ENCODE measurements at regions of chr12 and their contacts with region 1.

Region 1: GRCh38 chr12:27305673-27306456 is 26.8 kb upstream of the BMAL2 start:
- DNase-seq: no peak
- ATAC-seq: peak; percentile 26; the same call in 2 of the 3 replicates
- H3K4me3 ChIP-seq: no peak overlapping the region
- H3K27ac ChIP-seq: no peak overlapping the region
- H3K4me1 ChIP-seq: peaks cover 35% of the 10 kb centered on the region
- H3K27me3 ChIP-seq: no peaks in the 10 kb centered on the region
- CTCF ChIP-seq: peak in 1 of 3 experiments; percentile 15; a peak in 1 of 6 replicates
- EP300 ChIP-seq: no peak
- POLR2A ChIP-seq: no peak
- RAD21 ChIP-seq: peak; percentile 54; the same call in 1 of the 2 replicates

Region 2: GRCh38 chr12:27034607-27035293 is 271.1 kb before region 1 on chr12:
- CTCF ChIA-PET with region 1: interaction called, 107 read pairs
- POLR2A ChIA-PET with region 1: interaction called, 5 read pairs
- RAD21 ChIA-PET with region 1: interaction called, 37 read pairs
- SMC1A ChIA-PET with region 1: interaction called, 52 read pairs
- in situ Hi-C with region 1: no loop called
- intact Hi-C with region 1: loop called (anchors 1 kb)
- DNase-seq: no peak
- ATAC-seq: no peak
- H3K4me3 ChIP-seq: no peak overlapping the region
- H3K27ac ChIP-seq: no peak overlapping the region
- H3K4me1 ChIP-seq: no peaks in the 10 kb centered on the region
- H3K27me3 ChIP-seq: no peaks in the 10 kb centered on the region
- CTCF ChIP-seq: no peak
- EP300 ChIP-seq: no peak
- POLR2A ChIP-seq: no peak
- RAD21 ChIP-seq: no peak

Region 3: DNA sequence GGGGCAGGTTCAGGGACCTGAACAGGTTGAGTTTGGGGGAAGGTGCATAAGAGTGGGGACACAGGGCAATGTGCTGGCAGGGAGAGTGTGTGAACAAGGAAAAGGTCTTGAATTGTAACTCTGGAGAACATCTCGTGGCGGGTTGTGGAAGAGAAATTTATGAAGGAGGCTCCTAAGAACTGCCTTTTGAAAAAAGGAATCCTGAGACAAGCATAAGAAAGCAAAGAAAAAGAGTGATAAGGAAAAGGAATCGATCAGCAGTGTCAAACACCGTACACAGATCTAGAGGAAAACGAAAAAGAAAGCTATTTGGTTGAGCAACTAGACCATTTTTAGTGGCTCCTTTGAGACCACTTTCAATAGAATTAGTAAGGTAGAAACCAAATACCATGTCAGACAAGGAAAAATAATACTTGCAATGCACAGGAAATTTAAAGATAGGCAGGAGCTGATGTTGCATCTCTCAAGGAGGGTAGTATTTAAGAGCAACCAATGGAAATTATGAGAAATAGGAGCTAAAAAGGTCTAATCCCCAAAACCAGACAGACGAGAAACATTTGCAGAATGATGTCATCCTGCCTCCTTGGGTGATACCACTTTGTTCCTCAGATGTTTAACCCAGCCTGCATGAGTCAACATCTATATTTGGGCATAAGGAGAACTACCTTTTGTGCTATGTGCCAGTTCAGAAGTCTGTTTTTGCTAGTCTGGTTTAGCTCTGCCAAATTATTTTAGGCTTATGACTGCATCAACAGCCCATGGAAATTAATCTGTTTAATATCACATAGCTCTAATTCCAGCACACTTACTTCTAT is 126.3 kb before region 1 on chr12:
- CTCF ChIA-PET with region 1: interaction called, 26 read pairs
- POLR2A ChIA-PET with region 1: interaction called, 8 read pairs
- RAD21 ChIA-PET with region 1: interaction called, 34 read pairs
- SMC1A ChIA-PET with region 1: interaction called, 39 read pairs
- in situ Hi-C with region 1: no loop called
- intact Hi-C with region 1: no loop called
- DNase-seq: peak; percentile 96
- ATAC-seq: peak; percentile 94
- H3K4me3 ChIP-seq: peak overlapping the region; percentile 23
- H3K27ac ChIP-seq: peak overlapping the region; percentile 94
- H3K4me1 ChIP-seq: peaks cover 37% of the 10 kb centered on the region
- H3K27me3 ChIP-seq: no peaks in the 10 kb centered on the region
- CTCF ChIP-seq: no peak
- EP300 ChIP-seq: peak; percentile 27 to 48; a peak in 1 of 4 replicates
- POLR2A ChIP-seq: 0 out of 2 replicates have a peak, but pooled peaks have one; percentile 22
- RAD21 ChIP-seq: no peak

Region 4: GRCh38 chr12:27220057-27220987 is 85.5 kb before region 1 on chr12:
- CTCF ChIA-PET with region 1: interaction called, 66 read pairs
- POLR2A ChIA-PET with region 1: interaction called, 3 read pairs
- RAD21 ChIA-PET with region 1: interaction called, 49 read pairs
- SMC1A ChIA-PET with region 1: interaction called, 60 read pairs
- in situ Hi-C with region 1: no loop called
- intact Hi-C with region 1: loop called (anchors 5 kb)
- DNase-seq: peak; percentile 90
- ATAC-seq: peak; percentile 85
- H3K4me3 ChIP-seq: no peak overlapping the region
- H3K27ac ChIP-seq: peak overlapping the region; percentile 96
- H3K4me1 ChIP-seq: peaks cover 43% of the 10 kb centered on the region
- H3K27me3 ChIP-seq: no peaks in the 10 kb centered on the region
- CTCF ChIP-seq: no peak
- EP300 ChIP-seq: no peak; a peak in 1 of 4 replicates
- POLR2A ChIP-seq: 0 out of 2 replicates have a peak, but pooled peaks have one; percentile 19
- RAD21 ChIP-seq: peak; percentile 3; the same call in 1 of the 2 replicates

Region 5: GRCh38 chr12:27277846-27278260 is 28.0 kb before region 1 on chr12:
- CTCF ChIA-PET with region 1: interaction called, 125 read pairs
- POLR2A ChIA-PET with region 1: interaction called, 5 read pairs
- RAD21 ChIA-PET with region 1: interaction called, 215 read pairs
- SMC1A ChIA-PET with region 1: interaction called, 77 read pairs
- in situ Hi-C with region 1: no loop called
- intact Hi-C with region 1: no loop called
- DNase-seq: peak; percentile 73
- ATAC-seq: peak; percentile 91
- H3K4me3 ChIP-seq: no peak overlapping the region
- H3K27ac ChIP-seq: peak overlapping the region; percentile 61; the same call in 1 of the 2 replicates
- H3K4me1 ChIP-seq: peaks cover 22% of the 10 kb centered on the region
- H3K27me3 ChIP-seq: no peaks in the 10 kb centered on the region
- CTCF ChIP-seq: no peak
- EP300 ChIP-seq: peak; percentile 64 to 71; a peak in 3 of 4 replicates
- POLR2A ChIP-seq: no peak
- RAD21 ChIP-seq: no peak

Region 6: DNA sequence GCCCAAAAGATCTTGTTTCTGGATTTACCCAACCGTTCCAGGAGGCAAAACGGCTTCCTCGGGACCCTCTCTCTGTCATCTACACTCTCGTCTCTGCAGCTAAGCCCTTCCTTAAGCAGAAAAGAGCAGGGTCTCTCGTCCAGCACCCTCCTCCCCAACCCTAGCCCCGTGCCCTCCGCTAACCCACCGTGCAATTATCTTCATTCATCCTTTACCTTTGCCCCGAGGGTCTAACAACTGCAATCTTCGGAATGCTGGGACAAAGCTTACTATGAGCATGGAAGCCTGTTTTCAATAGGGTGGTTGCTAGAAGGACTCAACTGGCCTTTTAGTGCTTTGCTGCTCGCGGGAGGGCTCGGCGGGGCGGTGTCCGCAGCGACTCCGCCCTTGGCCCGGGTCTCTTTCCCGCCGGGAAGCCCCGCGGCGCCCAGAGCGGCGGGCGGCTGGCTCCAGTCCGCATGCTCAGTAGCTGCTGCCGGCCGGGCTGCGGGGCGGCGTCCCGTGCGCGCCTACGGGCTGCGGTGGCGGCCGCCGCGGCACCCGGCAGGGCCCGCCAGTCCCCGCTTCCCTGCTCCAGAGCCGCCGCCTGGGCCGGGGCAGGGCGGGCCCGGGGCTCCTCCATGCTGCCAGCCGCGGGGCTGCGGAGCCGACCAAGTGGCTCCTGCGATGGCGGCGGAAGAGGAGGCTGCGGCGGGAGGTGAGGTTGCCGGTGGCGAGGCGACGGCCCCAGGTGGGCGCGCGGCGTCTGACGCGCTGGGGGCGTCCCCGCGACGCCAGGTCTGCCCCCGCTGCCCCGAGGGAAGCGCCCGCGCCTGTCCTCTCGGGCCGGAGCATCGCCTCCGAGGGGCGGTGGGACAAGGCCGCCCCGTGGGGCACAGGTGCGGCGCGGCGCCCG is 26.8 kb after region 1 on chr12 and contains the start of gene BMAL2:
- CTCF ChIA-PET with region 1: interaction called, 17 read pairs
- POLR2A ChIA-PET with region 1: interaction called, 11 read pairs
- RAD21 ChIA-PET with region 1: interaction called, 36 read pairs
- SMC1A ChIA-PET with region 1: interaction called, 207 read pairs
- in situ Hi-C with region 1: no loop called
- intact Hi-C with region 1: no loop called
- DNase-seq: no peak
- ATAC-seq: peak; percentile 49
- H3K4me3 ChIP-seq: peak within 1 kb of the TSS; percentile 85
- H3K27ac ChIP-seq: peak within 1 kb of the TSS; percentile 89
- H3K4me1 ChIP-seq: peaks cover 42% of the 10 kb centered on the region
- H3K27me3 ChIP-seq: no peaks in the 10 kb centered on the region
- CTCF ChIP-seq: no peak
- EP300 ChIP-seq: no peak
- POLR2A ChIP-seq: peak; percentile 87
- RAD21 ChIP-seq: no peak
- polyA plus RNA-seq, gene BMAL2: 7.9 to 13.1 TPM

Region 7: DNA sequence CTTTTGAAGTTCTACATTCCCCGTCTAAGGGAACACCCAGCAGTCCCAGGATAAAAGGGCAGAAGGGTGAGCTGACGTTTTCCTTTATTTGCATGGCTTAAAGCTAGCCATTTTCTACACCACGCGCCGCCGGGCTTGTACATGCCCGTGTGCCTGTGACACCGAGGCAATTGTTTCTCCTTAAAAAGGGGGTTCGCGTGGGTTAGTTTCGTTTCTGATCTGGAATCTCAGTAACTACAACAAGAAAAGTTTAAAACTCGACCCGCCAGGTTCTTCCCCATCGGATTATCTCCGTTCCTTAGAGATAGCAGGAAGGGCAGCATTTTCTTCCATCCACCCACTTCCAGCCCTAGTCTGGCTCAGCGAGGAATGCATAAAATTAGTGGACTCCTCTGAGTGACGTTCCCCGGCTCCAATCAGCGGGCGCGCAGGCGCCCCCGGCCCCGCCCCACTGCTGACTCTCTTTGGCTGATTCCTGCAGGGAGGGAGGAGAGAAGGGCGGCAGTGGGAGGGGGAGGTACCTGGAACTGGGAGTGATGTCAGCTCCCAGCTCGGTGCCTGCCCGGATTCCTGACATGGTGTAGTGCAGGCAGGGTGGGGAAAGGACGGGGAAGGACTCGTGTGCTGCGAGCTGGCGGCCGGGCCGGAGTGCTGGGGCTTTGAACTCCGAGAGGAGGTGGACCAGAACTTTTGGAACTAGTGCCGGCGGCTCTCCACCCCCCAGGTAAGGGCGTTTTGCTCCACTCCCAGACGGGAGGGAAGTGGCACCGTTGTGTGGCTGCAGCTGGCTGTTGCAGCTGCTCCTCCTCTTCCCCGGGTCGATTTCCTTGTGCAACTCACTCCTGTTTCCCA is 218.0 kb after region 1 on chr12 and contains the start of gene PPFIBP1:
- CTCF ChIA-PET with region 1: no interaction called
- POLR2A ChIA-PET with region 1: no interaction called
- RAD21 ChIA-PET with region 1: no interaction called
- SMC1A ChIA-PET with region 1: no interaction called
- in situ Hi-C with region 1: no loop called
- intact Hi-C with region 1: no loop called
- DNase-seq: peak; percentile 91
- ATAC-seq: peak; percentile 98
- H3K4me3 ChIP-seq: peak within 1 kb of the TSS; percentile 73
- H3K27ac ChIP-seq: peak within 1 kb of the TSS; percentile 58
- H3K4me1 ChIP-seq: no peaks in the 10 kb centered on the region
- H3K27me3 ChIP-seq: no peaks in the 10 kb centered on the region
- CTCF ChIP-seq: peak in 1 of 3 experiments; percentile 23; a peak in 2 of 6 replicates
- EP300 ChIP-seq: no peak
- POLR2A ChIP-seq: peak; percentile 80
- RAD21 ChIP-seq: peak; percentile 43
- polyA plus RNA-seq, gene PPFIBP1: 0.47 to 0.55 TPM